Heart left ventricle (tissue), 16 donors: ENCODE measurements at regions of chr7 and their contacts with region 1.

Region 1: DNA sequence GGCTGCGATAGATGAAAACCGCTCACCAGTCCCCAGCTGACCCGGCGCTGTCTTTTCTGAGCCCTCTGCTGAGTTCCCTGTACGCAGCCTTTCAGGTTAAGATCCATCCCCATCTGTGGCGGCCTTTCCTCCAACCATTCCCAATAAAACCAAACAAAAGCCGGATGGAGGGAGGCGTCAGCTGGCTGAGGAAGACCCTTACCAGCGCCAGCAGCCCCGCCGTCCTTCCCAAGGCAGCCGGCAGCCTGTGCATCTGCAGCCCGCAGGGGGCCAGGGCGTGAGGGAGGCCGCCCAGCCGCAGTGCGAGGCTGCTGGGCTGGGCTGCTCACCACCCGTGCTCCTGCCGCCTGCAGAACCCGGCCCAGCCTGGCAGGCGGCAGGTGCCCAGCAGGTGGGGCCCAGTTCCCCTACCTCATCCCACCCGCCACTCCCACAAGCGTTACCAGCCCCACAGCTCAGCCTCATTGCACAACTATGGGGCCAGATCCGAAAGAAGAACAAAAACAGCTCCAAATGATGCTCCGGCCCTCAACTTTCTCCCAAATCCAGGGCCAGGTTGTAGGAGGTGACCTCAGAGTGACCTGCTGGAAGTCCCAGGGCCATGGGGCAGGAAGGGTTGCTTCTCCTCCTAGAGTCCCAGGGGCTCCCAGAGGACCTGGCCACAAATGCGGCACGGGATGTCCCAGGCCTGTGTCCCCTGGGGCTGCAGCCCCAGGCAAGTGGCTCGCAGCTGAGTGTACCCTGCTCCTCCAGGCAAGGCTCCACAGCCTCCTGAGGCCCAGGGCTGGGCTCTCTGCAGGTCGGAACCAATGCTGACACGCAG is 23.8 kb downstream of the PAPOLB start:
- DNase-seq: no peak
- ATAC-seq: peak in 3 of 4 donors; percentile 20 to 37 (median 31)
- H3K4me3 ChIP-seq: no peak overlapping the region
- H3K27ac ChIP-seq: peak overlapping the region in 5 of 12 donors; percentile 7 to 47 (median 23)
- H3K4me1 ChIP-seq: peaks cover 0 to 26% (median 2%) of the 10 kb centered on the region in 12 donors
- H3K27me3 ChIP-seq: no peaks in the 10 kb centered on the region
- CTCF ChIP-seq: no peak
- POLR2A ChIP-seq: no peak

Region 2: GRCh38 chr7:4871056-4871680 is 33.2 kb after region 1 on chr7:
- intact Hi-C with region 1: loop called in 1 of 10 experiments (anchors 5 kb)
- DNase-seq: peak in 1 of 5 donors; percentile 33
- ATAC-seq: no peak
- H3K4me3 ChIP-seq: no peak overlapping the region
- H3K27ac ChIP-seq: no peak overlapping the region
- H3K4me1 ChIP-seq: peaks cover 0 to 14% (median 0%) of the 10 kb centered on the region in 12 donors
- H3K27me3 ChIP-seq: peaks cover 0 to 9% (median 0%) of the 10 kb centered on the region in 9 donors
- CTCF ChIP-seq: no peak
- POLR2A ChIP-seq: no peak